CD4-positive, alpha-beta memory T cell (primary cell): ENCODE measurements at regions of chr12 and their contacts with region 1.

Region 1: GRCh38 chr12:47216150-47216677 is 136.5 kb upstream of the AMIGO2 start:
- DNase-seq: peak; percentile 71 to 87 (median 78)
- H3K4me3 ChIP-seq: peak overlapping the region; percentile 70 to 73
- H3K4me3 Mint-ChIP-seq: peak overlapping the region; percentile 92 to 99 (median 96)
- H3K27ac ChIP-seq: peak overlapping the region; percentile 65
- H3K27ac Mint-ChIP-seq: peak overlapping the region; percentile 92 to 97 (median 94)
- H3K4me1 ChIP-seq: peaks cover 32% of the 10 kb centered on the region
- H3K4me1 Mint-ChIP-seq: peaks cover 14 to 73% (median 27%) of the 10 kb centered on the region in 4 donors
- H3K27me3 ChIP-seq: no peaks in the 10 kb centered on the region
- H3K27me3 Mint-ChIP-seq: no peaks in the 10 kb centered on the region

Region 2: GRCh38 chr12:46372544-46373110 is 843.6 kb before region 1 on chr12 and contains the start of gene SLC38A2:
- CTCF ChIA-PET with region 1: no interaction called
- POLR2A ChIA-PET with region 1: no interaction called
- intact Hi-C with region 1: loop called (anchors 2 kb)
- DNase-seq: peak; percentile 94 to 96 (median 95)
- H3K4me3 ChIP-seq: peak within 1 kb of the TSS; percentile 76 to 93
- H3K4me3 Mint-ChIP-seq: peak within 1 kb of the TSS; percentile 94 to 99 (median 96)
- H3K27ac ChIP-seq: peak within 1 kb of the TSS; percentile 88
- H3K27ac Mint-ChIP-seq: peak within 1 kb of the TSS; percentile 93 to 99 (median 99)
- H3K4me1 ChIP-seq: peaks cover 54% of the 10 kb centered on the region
- H3K4me1 Mint-ChIP-seq: peaks cover 39 to 68% (median 44%) of the 10 kb centered on the region in 4 donors
- H3K27me3 ChIP-seq: no peaks in the 10 kb centered on the region
- H3K27me3 Mint-ChIP-seq: peaks cover 0 to 6% of the 10 kb centered on the region in 2 donors
- total RNA-seq, gene SLC38A2: 200 to 208 TPM

Region 3: GRCh38 chr12:47085815-47086252 is 130.4 kb before region 1 on chr12:
- CTCF ChIA-PET with region 1: interaction called, 3 read pairs
- POLR2A ChIA-PET with region 1: interaction called, 154 read pairs
- intact Hi-C with region 1: no loop called
- DNase-seq: peak; percentile 37 to 78 (median 44)
- H3K4me3 ChIP-seq: no peak overlapping the region
- H3K4me3 Mint-ChIP-seq: peak overlapping the region in 7 of 8 donors; percentile 0 to 79 (median 49)
- H3K27ac ChIP-seq: peak overlapping the region; percentile 29
- H3K27ac Mint-ChIP-seq: peak overlapping the region; percentile 53 to 99 (median 84)
- H3K4me1 ChIP-seq: peaks cover 58% of the 10 kb centered on the region
- H3K4me1 Mint-ChIP-seq: peaks cover 47 to 62% (median 54%) of the 10 kb centered on the region in 4 donors
- H3K27me3 ChIP-seq: no peaks in the 10 kb centered on the region
- H3K27me3 Mint-ChIP-seq: no peaks in the 10 kb centered on the region

Region 4: GRCh38 chr12:47202176-47202575 is 14.0 kb before region 1 on chr12:
- CTCF ChIA-PET with region 1: interaction called, 12 read pairs
- POLR2A ChIA-PET with region 1: interaction called, 354 read pairs
- intact Hi-C with region 1: no loop called
- DNase-seq: no peak
- H3K4me3 ChIP-seq: no peak overlapping the region
- H3K4me3 Mint-ChIP-seq: no peak overlapping the region
- H3K27ac ChIP-seq: no peak overlapping the region
- H3K27ac Mint-ChIP-seq: peak overlapping the region in 5 of 7 donors; percentile 11 to 87 (median 62)
- H3K4me1 ChIP-seq: peaks cover 75% of the 10 kb centered on the region
- H3K4me1 Mint-ChIP-seq: peaks cover 64 to 80% (median 72%) of the 10 kb centered on the region in 4 donors
- H3K27me3 ChIP-seq: no peaks in the 10 kb centered on the region
- H3K27me3 Mint-ChIP-seq: no peaks in the 10 kb centered on the region

Region 5: DNA sequence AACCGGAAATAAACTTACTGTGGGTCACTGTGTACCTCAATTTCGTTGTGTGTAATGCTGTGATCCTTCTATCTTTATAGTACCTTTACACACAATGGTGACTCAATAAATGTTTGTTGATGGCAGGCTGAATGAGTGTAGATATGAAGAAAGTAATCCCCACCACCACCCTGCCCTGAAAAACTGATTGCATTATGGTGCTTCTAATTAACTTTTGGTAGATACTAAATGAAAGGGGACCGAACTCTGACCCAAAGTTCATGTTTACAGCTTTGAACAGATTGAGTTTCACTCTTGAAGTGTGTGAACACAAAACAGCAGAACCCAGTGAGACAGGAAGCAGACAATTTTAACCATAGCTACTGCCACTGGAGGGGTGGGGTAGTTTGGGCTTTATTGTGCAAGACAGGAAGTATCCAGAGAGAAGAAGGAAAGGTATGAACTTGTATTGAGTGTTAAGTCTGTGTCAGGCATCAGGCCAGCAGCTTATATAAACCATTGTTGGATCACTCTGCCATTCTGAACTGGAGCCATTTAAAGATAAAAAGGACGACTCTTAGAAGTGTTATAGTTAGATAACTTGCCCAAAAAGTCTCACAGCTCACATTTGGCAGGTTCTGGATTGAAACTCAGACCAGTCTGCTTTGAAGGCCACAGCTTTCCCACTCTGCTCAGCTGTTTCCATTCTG is 60.6 kb after region 1 on chr12:
- CTCF ChIA-PET with region 1: interaction called, 8 read pairs
- POLR2A ChIA-PET with region 1: interaction called, 122 read pairs
- intact Hi-C with region 1: loop called (anchors 1 kb)
- DNase-seq: peak; percentile 75 to 85 (median 81)
- H3K4me3 ChIP-seq: peak overlapping the region in 1 of 2 donors; percentile 19
- H3K4me3 Mint-ChIP-seq: peak overlapping the region; percentile 51 to 87 (median 74)
- H3K27ac ChIP-seq: peak overlapping the region; percentile 55
- H3K27ac Mint-ChIP-seq: peak overlapping the region; percentile 85 to 98 (median 92)
- H3K4me1 ChIP-seq: peaks cover 44% of the 10 kb centered on the region
- H3K4me1 Mint-ChIP-seq: peaks cover 32 to 59% (median 53%) of the 10 kb centered on the region in 4 donors
- H3K27me3 ChIP-seq: no peaks in the 10 kb centered on the region
- H3K27me3 Mint-ChIP-seq: no peaks in the 10 kb centered on the region

Region 6: DNA sequence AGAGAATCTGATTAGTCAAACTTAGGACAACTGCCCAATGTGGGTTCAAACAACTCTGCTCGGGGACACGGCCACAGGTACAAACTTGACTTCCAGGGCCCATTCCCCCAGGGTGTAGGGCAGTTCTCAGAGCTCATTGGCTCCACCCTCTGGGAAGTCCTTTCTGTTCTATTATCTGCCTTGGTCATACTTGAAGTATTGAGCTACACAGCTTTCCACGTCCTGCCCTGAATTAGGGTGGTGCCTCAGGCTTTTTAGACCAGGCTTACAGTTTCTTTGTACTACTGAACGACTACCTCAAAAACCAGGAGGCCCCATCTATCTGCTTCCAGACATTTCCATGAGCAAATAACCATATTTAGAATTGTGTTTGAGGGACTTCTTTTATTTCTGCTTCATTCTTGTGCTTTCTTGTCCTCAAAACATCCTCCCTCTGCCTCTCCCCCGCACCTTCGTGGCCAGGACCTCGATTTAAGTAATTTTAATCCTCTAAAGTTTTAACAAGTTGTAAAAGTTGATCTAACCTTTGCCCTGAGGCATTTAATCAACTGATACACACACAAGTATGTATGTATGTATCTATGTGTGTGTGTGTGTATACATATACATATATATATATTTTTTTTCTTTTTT is 145.3 kb after region 1 on chr12:
- CTCF ChIA-PET with region 1: no interaction called
- POLR2A ChIA-PET with region 1: interaction called, 16 read pairs
- intact Hi-C with region 1: loop called (anchors 2 kb)
- DNase-seq: peak; percentile 23 to 64 (median 29)
- H3K4me3 ChIP-seq: peak overlapping the region; percentile 37 to 41
- H3K4me3 Mint-ChIP-seq: peak overlapping the region; percentile 73 to 93 (median 86)
- H3K27ac ChIP-seq: peak overlapping the region; percentile 90
- H3K27ac Mint-ChIP-seq: peak overlapping the region; percentile 94 to 99 (median 96)
- H3K4me1 ChIP-seq: peaks cover 81% of the 10 kb centered on the region
- H3K4me1 Mint-ChIP-seq: peaks cover 48 to 63% (median 55%) of the 10 kb centered on the region in 4 donors
- H3K27me3 ChIP-seq: no peaks in the 10 kb centered on the region
- H3K27me3 Mint-ChIP-seq: no peaks in the 10 kb centered on the region